Sigmoid colon (tissue), 7 donors: ENCODE measurements at regions of chr15 and their contacts with region 1.

Region 1: GRCh38 chr15:78909791-78910228 is 35.0 kb downstream of the CTSH start:
- DNase-seq: no peak
- H3K4me3 ChIP-seq: no peak overlapping the region
- H3K27ac ChIP-seq: peak overlapping the region in 2 of 4 donors; percentile 34 to 36
- H3K4me1 ChIP-seq: peaks cover 0 to 60% (median 39%) of the 10 kb centered on the region in 4 donors
- H3K27me3 ChIP-seq: no peaks in the 10 kb centered on the region
- CTCF ChIP-seq: peak; percentile 37 to 74 (median 53)
- EP300 ChIP-seq: no peak
- POLR2A ChIP-seq: no peak

Region 2: DNA sequence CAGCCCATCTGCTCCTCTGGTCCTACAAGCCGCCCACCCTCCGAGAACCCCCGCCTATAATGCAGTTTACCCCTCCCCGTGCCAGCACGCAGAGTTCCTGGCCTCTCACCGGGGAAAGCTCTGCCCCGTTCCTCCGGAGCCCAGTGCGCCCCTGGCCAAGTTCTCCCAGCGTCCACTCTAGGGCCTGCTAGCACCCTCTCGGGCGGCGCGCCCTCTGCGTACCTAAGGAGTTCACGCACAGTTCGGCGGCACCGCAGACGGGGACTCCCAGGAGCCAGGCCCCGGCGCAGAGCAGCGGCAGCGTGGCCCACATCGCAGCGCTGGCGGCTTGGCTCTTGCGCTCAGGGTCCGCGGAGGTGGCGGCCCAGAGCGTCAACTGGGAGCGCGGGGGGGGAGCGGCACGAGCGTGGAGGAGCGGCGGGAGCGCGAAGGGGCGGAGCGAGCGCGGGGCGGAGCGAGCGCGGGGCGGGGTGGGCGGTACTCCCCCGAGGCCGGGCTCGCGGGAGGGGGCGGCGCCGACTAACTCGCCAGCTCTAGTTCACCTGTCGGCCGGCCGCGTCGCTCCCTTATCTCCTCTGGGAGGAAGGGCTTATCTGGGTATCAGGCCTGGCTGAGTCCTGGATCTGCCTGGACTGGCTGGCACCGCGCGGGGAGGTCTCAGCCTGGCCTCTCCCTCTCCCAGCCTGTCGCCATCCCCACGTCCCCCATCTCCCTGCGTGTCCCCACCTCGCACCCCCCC is 35.0 kb after region 1 on chr15 and contains the start of gene CTSH:
- intact Hi-C with region 1: loop called (anchors 5 kb)
- DNase-seq: peak; percentile 87
- H3K4me3 ChIP-seq: peak within 1 kb of the TSS; percentile 43 to 58 (median 51)
- H3K27ac ChIP-seq: peak within 1 kb of the TSS; percentile 51 to 67 (median 64)
- H3K4me1 ChIP-seq: peaks cover 0 to 14% (median 13%) of the 10 kb centered on the region in 4 donors
- H3K27me3 ChIP-seq: no peaks in the 10 kb centered on the region
- CTCF ChIP-seq: no peak
- EP300 ChIP-seq: no peak
- POLR2A ChIP-seq: no peak
- total RNA-seq, gene CTSH: 37.4 to 102 (median 96.3) TPM

Region 3: GRCh38 chr15:78979456-78980320 is 69.9 kb after region 1 on chr15:
- intact Hi-C with region 1: loop called (anchors 5 kb)
- DNase-seq: peak; percentile 82
- H3K4me3 ChIP-seq: no peak overlapping the region
- H3K27ac ChIP-seq: no peak overlapping the region
- H3K4me1 ChIP-seq: peaks cover 0 to 17% (median 4%) of the 10 kb centered on the region in 4 donors
- H3K27me3 ChIP-seq: no peaks in the 10 kb centered on the region
- CTCF ChIP-seq: peak; percentile 45 to 56 (median 50)
- EP300 ChIP-seq: no peak
- POLR2A ChIP-seq: no peak

Region 4: DNA sequence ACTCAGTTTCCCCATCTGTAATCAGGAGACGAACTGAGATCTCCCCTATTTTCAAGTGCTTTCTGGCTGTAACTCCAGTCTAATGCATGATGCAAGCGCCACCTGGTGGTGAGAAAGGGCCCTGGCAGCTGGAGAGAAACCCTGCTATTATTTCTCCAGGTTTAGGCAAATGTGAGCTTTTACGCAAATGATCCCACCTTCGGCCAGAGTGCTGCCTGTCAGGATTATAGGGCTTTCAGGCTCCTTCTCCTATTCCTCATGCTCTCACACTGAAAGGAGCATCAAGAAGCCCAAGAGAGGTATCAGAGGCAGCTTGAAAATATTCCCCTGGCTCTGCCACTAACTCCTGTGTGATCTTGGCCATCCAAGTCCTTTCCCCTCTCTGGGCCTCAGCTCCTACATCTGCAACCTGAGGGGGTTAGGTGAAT is 274.7 kb after region 1 on chr15:
- intact Hi-C with region 1: loop called (anchors 5 kb)
- DNase-seq: peak; percentile 83
- H3K4me3 ChIP-seq: no peak overlapping the region
- H3K27ac ChIP-seq: no peak overlapping the region
- H3K4me1 ChIP-seq: no peaks in the 10 kb centered on the region
- H3K27me3 ChIP-seq: no peaks in the 10 kb centered on the region
- CTCF ChIP-seq: peak; percentile 88 to 98 (median 94)
- EP300 ChIP-seq: no peak
- POLR2A ChIP-seq: no peak